A549 (cell line): ENCODE measurements at regions of chrX and their contacts with region 1.

Region 1: DNA sequence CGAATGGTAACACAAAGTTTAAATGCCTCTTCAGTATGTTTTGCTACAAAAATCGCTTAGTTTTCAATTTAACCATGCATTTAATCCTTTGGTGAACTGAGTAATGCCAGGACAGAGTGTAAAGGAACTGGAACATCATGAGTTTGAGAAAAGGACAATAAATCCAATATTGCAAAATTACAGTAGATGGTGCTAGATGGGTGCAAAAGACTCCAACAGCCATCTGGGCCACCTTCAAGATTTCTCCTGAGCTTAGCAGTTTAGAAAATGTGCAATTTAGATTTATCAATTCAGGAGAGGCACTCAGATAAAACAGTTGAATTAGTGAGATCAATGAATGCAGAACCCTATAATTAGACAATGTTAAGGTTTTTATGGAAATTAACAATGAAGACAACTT is 33.2 kb upstream of the MID1IP1 start:
- DNase-seq: peak in 1 of 2 experiments; percentile 11
- ATAC-seq: peak in 1 of 2 experiments; percentile 46; a peak in 1 of 6 replicates
- H3K4me3 ChIP-seq: no peak overlapping the region
- H3K27ac ChIP-seq: no peak overlapping the region
- H3K4me1 ChIP-seq: no peaks in the 10 kb centered on the region
- CTCF ChIP-seq: peak; percentile 56
- EP300 ChIP-seq: no peak
- POLR2A ChIP-seq: no peak
- RAD21 ChIP-seq: peak; percentile 69 to 71; a peak in 4 of 5 replicates

Region 2: DNA sequence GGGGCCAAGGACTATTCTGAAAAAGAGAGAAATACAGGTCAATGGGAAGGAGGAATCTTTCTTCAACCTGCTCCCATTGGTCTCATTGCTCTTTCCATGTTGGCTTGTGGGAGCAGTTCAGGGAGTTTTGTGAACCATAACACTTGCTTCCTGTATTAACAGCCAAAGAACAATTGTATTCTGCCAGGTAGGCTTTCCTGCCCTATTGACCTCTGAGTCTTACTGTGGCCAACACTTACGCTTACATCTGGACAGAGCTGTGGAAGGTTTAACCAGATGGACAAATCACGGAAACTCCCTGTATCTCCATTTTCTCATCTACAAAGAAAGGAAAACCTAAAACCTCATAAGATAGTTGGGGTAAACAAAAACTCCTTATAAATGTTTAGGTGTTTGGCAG is 63.9 kb after region 1 on chrX:
- CTCF ChIA-PET with region 1: no interaction called
- POLR2A ChIA-PET with region 1: no interaction called
- DNase-seq: no peak
- ATAC-seq: no peak
- H3K4me3 ChIP-seq: no peak overlapping the region
- H3K27ac ChIP-seq: no peak overlapping the region
- H3K4me1 ChIP-seq: no peaks in the 10 kb centered on the region
- CTCF ChIP-seq: no peak
- EP300 ChIP-seq: no peak
- POLR2A ChIP-seq: no peak
- RAD21 ChIP-seq: no peak

Region 3: DNA sequence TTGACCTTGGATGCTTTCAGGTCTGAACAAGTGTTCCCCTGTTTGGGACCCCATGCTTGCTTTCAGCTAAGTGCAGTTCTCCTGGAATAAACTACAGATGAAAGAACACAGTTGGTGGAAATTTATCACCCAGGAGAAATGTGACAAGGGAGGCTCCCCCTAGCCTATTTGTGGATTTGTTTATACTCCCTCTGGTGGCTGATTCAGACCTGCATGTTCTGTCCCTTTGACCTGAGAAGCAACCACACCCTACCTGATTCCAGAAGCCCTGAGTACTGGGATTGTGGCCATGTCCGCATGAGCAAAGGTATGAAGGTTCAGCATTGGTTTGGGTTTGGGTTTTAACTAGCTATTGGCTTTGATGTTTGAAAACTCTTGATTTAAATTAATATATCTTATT is 474.1 kb after region 1 on chrX:
- CTCF ChIA-PET with region 1: interaction called, 10 read pairs
- POLR2A ChIA-PET with region 1: no interaction called
- DNase-seq: peak; percentile 6 to 41
- ATAC-seq: peak; percentile 62 to 81; a peak in 3 of 6 replicates
- H3K4me3 ChIP-seq: no peak overlapping the region
- H3K27ac ChIP-seq: no peak overlapping the region
- H3K4me1 ChIP-seq: no peaks in the 10 kb centered on the region
- CTCF ChIP-seq: peak; percentile 29; the same call in 2 of the 3 replicates
- EP300 ChIP-seq: no peak
- POLR2A ChIP-seq: no peak
- RAD21 ChIP-seq: no peak; a peak in 2 of 5 replicates